Activated B cell treated with CpG ODN at 0.5 μM for 24 hours (primary cell): ENCODE measurements at regions of chr14 and their contacts with region 1.

Region 1: GRCh38 chr14:31207755-31208545 is at the start of gene HECTD1:
- DNase-seq: no peak
- ATAC-seq: peak; percentile 82
- H3K4me3 Mint-ChIP-seq: peak within 1 kb of the TSS; percentile 96
- H3K27ac Mint-ChIP-seq: peak within 1 kb of the TSS; percentile 99
- H3K4me1 Mint-ChIP-seq: peaks cover 39% of the 10 kb centered on the region
- H3K27me3 Mint-ChIP-seq: no peaks in the 10 kb centered on the region
- CTCF ChIP-seq: no peak
- total RNA-seq, gene HECTD1: 139 and 163 TPM in 2 replicates

Region 2: GRCh38 chr14:30621940-30622830 is 585.8 kb before region 1 on chr14 and contains the start of gene SCFD1:
- CTCF ChIA-PET with region 1: no interaction called
- POLR2A ChIA-PET with region 1: interaction called, 14 read pairs
- intact Hi-C with region 1: loop called (anchors 2 kb)
- DNase-seq: peak; percentile 92
- ATAC-seq: peak; percentile 97
- H3K4me3 Mint-ChIP-seq: peak within 1 kb of the TSS; percentile 93
- H3K27ac Mint-ChIP-seq: peak within 1 kb of the TSS; percentile 93
- H3K4me1 Mint-ChIP-seq: peaks cover 47% of the 10 kb centered on the region
- H3K27me3 Mint-ChIP-seq: no peaks in the 10 kb centered on the region
- CTCF ChIP-seq: no peak
- total RNA-seq, gene SCFD1: 70.1 and 83.6 TPM in 2 replicates

Region 3: DNA sequence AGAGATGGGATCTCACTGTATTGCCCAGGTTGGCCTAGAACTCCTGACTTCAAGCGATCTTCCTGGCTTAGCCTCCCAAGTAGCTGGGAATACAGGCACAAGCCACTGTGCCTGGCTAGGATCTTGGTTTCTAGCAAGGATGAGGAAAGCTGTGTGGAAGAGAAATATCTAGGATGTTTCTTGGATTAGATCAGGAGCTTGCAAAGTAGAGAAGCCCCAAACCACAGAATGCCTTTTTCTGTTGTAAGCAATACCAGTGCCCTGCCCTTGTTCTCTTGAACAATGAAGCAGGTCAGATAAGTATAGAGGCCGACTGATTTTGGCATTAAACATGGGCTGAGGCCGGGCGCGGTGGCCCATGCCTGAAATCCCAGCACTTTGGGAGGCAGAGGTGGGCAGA is 137.5 kb before region 1 on chr14:
- CTCF ChIA-PET with region 1: no interaction called
- POLR2A ChIA-PET with region 1: no interaction called
- intact Hi-C with region 1: no loop called
- DNase-seq: no peak
- ATAC-seq: no peak
- H3K4me3 Mint-ChIP-seq: no peak overlapping the region
- H3K27ac Mint-ChIP-seq: no peak overlapping the region
- H3K4me1 Mint-ChIP-seq: no peaks in the 10 kb centered on the region
- H3K27me3 Mint-ChIP-seq: no peaks in the 10 kb centered on the region
- CTCF ChIP-seq: no peak

Region 4: GRCh38 chr14:31194095-31194494 is 13.9 kb before region 1 on chr14:
- CTCF ChIA-PET with region 1: interaction called, 4 read pairs
- POLR2A ChIA-PET with region 1: interaction called, 14 read pairs
- intact Hi-C with region 1: loop called (anchors 1 kb)
- DNase-seq: no peak
- ATAC-seq: no peak
- H3K4me3 Mint-ChIP-seq: no peak overlapping the region
- H3K27ac Mint-ChIP-seq: no peak overlapping the region
- H3K4me1 Mint-ChIP-seq: peaks cover 37% of the 10 kb centered on the region
- H3K27me3 Mint-ChIP-seq: no peaks in the 10 kb centered on the region
- CTCF ChIP-seq: no peak

Region 5: DNA sequence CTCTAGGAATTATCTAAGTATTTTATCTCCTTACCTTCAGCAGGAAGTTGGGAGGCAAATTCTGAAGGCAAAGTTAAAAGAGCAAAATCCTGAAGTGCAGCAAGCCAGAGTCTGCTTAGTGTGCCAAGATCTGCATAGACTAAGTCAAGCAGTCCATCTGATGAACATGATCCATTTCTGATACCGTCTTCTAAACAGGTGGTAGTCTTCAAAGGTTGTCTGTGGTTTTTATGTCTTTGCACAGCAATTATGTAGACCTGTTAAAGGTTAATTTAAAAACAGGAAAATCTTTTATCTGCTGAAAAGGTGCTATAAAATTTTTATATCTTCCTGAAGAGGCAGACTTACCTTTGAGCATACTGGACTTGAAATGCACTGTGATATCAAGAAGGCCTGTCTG is 105.0 kb after region 1 on chr14:
- CTCF ChIA-PET with region 1: no interaction called
- POLR2A ChIA-PET with region 1: no interaction called
- intact Hi-C with region 1: loop called (anchors 5 kb)
- DNase-seq: no peak
- ATAC-seq: no peak
- H3K4me3 Mint-ChIP-seq: no peak overlapping the region
- H3K27ac Mint-ChIP-seq: no peak overlapping the region
- H3K4me1 Mint-ChIP-seq: no peaks in the 10 kb centered on the region
- H3K27me3 Mint-ChIP-seq: no peaks in the 10 kb centered on the region
- CTCF ChIP-seq: no peak

Region 6: DNA sequence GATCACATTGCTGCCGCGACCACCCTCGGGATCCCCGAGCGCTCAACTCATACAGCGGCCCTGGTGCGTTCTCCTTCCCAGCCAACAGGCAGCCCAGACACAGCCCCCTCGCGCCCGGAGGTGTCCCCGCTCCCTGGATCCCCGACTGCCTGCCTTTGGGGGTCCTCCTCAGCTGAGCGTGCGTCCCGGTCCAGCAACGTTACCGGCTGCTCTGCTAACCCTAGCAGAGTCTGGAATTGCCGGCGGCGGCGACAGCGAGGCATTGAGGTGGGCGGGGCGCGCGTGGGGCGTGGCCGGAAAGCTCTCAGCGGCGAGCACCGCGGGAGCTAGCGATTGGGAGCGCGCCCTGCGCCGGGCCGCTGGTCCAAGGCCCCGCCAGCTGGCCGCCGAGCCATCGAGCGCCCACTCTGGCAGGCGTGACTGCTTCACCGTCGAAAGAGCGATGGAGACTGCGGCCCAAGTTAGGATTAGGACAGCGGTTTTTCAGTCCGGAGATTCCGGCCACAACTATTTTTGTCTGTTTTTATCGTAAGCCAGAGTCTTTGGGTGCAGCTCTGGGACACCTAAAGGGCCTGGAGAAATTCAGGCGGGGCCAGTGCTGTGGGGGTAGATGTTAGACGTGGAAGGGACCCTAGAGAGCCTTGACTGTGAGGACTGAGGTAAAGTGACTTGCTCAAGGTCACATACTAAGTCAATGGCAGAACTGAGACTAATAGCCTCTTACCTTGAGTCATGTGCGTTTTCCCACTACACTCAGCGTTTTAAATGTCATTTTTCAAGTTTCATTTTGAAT is 212.6 kb after region 1 on chr14 and contains the start of gene HEATR5A:
- CTCF ChIA-PET with region 1: no interaction called
- POLR2A ChIA-PET with region 1: interaction called, 25 read pairs
- intact Hi-C with region 1: loop called (anchors 1 kb)
- DNase-seq: peak; percentile 95
- ATAC-seq: peak; percentile 97
- H3K4me3 Mint-ChIP-seq: peak within 1 kb of the TSS; percentile 96
- H3K27ac Mint-ChIP-seq: peak within 1 kb of the TSS; percentile 90
- H3K4me1 Mint-ChIP-seq: peaks cover 22% of the 10 kb centered on the region
- H3K27me3 Mint-ChIP-seq: no peaks in the 10 kb centered on the region
- CTCF ChIP-seq: no peak
- total RNA-seq, gene HEATR5A: 11.1 and 13.2 TPM in 2 replicates

Region 7: GRCh38 chr14:31561155-31561846 is 353.4 kb after region 1 on chr14 and contains the start of gene NUBPL:
- CTCF ChIA-PET with region 1: no interaction called
- POLR2A ChIA-PET with region 1: no interaction called
- intact Hi-C with region 1: loop called (anchors 1 kb)
- DNase-seq: peak; percentile 97
- ATAC-seq: peak; percentile 92
- H3K4me3 Mint-ChIP-seq: peak within 1 kb of the TSS; percentile 97
- H3K27ac Mint-ChIP-seq: peak within 1 kb of the TSS; percentile 97
- H3K4me1 Mint-ChIP-seq: peaks cover 24% of the 10 kb centered on the region
- H3K27me3 Mint-ChIP-seq: peaks cover 6% of the 10 kb centered on the region
- CTCF ChIP-seq: no peak
- total RNA-seq, gene NUBPL: 11.7 and 11.9 TPM in 2 replicates